ENCODE measurements at regions of chr9 and their contacts with region 1.

Region 1: GRCh38 chr9:99478469-99479027 is 256.5 kb downstream of the SEC61B start:
- DNase-seq: peak; percentile 89
- H3K4me3 ChIP-seq: no peak overlapping the region
- H3K27ac ChIP-seq: peak overlapping the region in 1 of 2 experiments; percentile 99; a peak in 2 of 4 replicates
- H3K4me1 ChIP-seq: peaks cover 0 to 41% of the 10 kb centered on the region in 2 experiments; a peak in 2 of 4 replicates
- H3K27me3 ChIP-seq: no peaks in the 10 kb centered on the region
- CTCF ChIP-seq: no peak
- EP300 ChIP-seq: peak; percentile 31 to 98; a peak in 3 of 4 replicates
- RAD21 ChIP-seq: peak; percentile 50

Region 2: GRCh38 chr9:99465231-99465907 is 13.2 kb before region 1 on chr9:
- CTCF ChIA-PET with region 1: interaction called, 15 read pairs
- POLR2A ChIA-PET with region 1: interaction called, 14 read pairs
- DNase-seq: peak; percentile 71
- H3K4me3 ChIP-seq: no peak overlapping the region; a peak in 1 of 4 replicates
- H3K27ac ChIP-seq: peak overlapping the region in 1 of 2 experiments; percentile 100; a peak in 3 of 4 replicates
- H3K4me1 ChIP-seq: peaks cover 13 to 38% of the 10 kb centered on the region in 2 experiments; a peak in 3 of 4 replicates
- H3K27me3 ChIP-seq: no peaks in the 10 kb centered on the region
- CTCF ChIP-seq: no peak
- EP300 ChIP-seq: peak in 1 of 2 experiments; percentile 99; a peak in 2 of 4 replicates
- RAD21 ChIP-seq: peak; percentile 57

Region 3: DNA sequence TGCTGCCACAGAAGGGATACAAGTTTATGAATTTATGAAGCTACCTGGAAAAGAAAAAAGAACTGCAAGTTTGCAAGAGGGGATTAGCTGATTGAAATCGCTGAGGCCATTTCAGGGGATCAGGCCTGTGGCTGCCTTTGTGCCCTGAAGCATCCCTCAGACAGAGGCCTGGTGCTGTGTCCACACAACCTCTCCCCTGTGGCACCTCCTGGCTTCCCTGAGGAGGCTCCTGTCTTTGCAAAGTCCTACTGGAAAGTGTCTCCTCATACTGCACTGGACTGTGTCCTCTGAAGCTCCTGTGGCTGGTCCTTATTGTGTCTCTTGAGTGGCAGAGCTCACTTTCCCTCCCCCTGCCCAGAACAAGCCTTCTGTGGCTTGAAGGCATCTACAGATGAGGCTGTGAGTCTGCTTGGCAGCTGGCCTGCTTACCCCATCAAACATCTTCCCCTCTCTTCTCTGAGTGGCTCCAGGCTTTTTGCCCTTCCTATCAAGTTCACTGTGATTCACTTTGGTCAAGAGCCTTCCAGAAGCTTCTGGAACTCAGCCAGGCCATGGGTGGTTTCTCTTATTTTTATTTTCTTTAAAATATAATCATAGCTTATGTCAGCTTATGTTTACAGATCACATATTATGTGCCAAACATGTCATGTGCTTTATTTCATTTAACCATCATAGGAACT is 10.3 kb after region 1 on chr9:
- CTCF ChIA-PET with region 1: interaction called, 18 read pairs
- POLR2A ChIA-PET with region 1: interaction called, 8 read pairs
- DNase-seq: peak; percentile 51
- H3K4me3 ChIP-seq: no peak overlapping the region
- H3K27ac ChIP-seq: peak overlapping the region in 1 of 2 experiments; percentile 87; a peak in 2 of 4 replicates
- H3K4me1 ChIP-seq: peaks cover 0 to 38% of the 10 kb centered on the region in 2 experiments; a peak in 2 of 4 replicates
- H3K27me3 ChIP-seq: no peaks in the 10 kb centered on the region
- CTCF ChIP-seq: no peak
- EP300 ChIP-seq: no peak; a peak in 1 of 4 replicates
- RAD21 ChIP-seq: peak; percentile 27

Measured in SK-N-SH (cell line).